ENCODE measurements at regions of chr5 and their contacts with region 1.

Region 1: GRCh38 chr5:91361055-91361701 is 21.9 kb downstream of the ARRDC3 start:
- DNase-seq: no peak
- H3K4me3 Mint-ChIP-seq: peak overlapping the region; percentile 2
- H3K27ac Mint-ChIP-seq: peak overlapping the region; percentile 56
- H3K4me1 Mint-ChIP-seq: peaks cover 12% of the 10 kb centered on the region
- H3K27me3 Mint-ChIP-seq: peaks cover 15% of the 10 kb centered on the region

Region 2: GRCh38 chr5:90783460-90784333 is 577.5 kb before region 1 on chr5:
- CTCF ChIA-PET with region 1: no interaction called
- POLR2A ChIA-PET with region 1: no interaction called
- intact Hi-C with region 1: no loop called
- DNase-seq: peak; percentile 70
- H3K4me3 Mint-ChIP-seq: no peak overlapping the region
- H3K27ac Mint-ChIP-seq: no peak overlapping the region
- H3K4me1 Mint-ChIP-seq: no peaks in the 10 kb centered on the region
- H3K27me3 Mint-ChIP-seq: peaks cover 4% of the 10 kb centered on the region

Region 3: GRCh38 chr5:91162534-91163381 is 198.4 kb before region 1 on chr5:
- CTCF ChIA-PET with region 1: no interaction called
- POLR2A ChIA-PET with region 1: no interaction called
- intact Hi-C with region 1: loop called (anchors 5 kb)
- DNase-seq: peak; percentile 86
- H3K4me3 Mint-ChIP-seq: no peak overlapping the region
- H3K27ac Mint-ChIP-seq: peak overlapping the region; percentile 67
- H3K4me1 Mint-ChIP-seq: peaks cover 19% of the 10 kb centered on the region
- H3K27me3 Mint-ChIP-seq: no peaks in the 10 kb centered on the region

Region 4: DNA sequence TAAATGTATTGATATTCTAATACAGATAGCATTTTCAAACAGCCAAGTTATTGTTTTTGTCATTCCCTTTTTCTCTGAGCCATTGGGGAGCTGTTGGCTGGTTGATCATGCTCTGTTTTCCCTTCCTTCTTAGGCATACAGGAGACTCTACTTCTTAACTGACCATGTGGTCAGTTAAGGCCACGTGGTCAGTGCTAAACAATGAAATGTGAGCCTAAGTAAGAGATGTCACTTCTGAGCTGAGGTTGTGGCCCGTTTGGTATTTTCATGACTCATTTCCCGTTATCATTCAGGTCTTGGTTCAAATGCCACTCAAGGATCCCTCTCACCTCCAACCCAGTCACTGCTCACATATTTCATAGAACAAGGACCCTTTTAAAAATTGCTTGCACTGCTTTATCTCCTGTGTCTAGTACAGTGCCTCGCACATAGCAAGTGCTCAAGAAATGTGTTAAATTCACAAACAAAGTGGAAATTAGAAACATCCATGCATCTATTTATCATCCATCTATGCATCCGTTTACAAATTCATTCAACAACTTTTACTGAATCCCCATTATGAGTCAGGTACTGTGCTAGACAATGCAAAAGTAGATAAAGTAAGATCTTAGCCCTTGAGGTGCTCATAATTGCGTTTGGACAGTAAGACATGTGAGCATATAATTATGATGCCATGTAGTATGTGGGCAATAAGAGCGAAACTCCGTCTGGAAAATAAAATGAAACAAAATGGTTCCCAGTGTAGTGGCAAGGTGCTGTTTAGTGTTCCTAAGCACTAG is 28.7 kb before region 1 on chr5:
- CTCF ChIA-PET with region 1: no interaction called
- POLR2A ChIA-PET with region 1: no interaction called
- intact Hi-C with region 1: loop called (anchors 5 kb)
- DNase-seq: peak; percentile 41
- H3K4me3 Mint-ChIP-seq: no peak overlapping the region
- H3K27ac Mint-ChIP-seq: no peak overlapping the region
- H3K4me1 Mint-ChIP-seq: peaks cover 15% of the 10 kb centered on the region
- H3K27me3 Mint-ChIP-seq: no peaks in the 10 kb centered on the region

Region 5: DNA sequence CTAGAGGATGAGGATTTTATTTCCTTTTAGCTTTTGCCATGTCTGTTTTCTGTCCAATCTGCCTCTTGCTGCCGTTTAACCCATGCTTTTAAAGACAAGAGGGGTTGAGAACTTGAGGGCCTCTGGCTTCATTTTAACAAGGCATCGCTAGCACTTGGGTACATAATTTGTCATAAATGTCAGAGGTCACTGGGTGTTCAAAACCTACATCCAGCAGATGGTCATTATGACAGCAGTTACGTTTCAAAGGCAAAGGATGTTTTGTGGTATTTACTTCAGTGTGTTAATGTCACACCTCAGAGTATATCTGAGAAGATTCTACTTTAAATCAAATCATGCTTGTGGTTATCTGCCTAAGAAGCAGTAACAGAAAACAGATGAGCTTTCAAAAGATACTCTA is 1301.6 kb after region 1 on chr5:
- CTCF ChIA-PET with region 1: no interaction called
- POLR2A ChIA-PET with region 1: no interaction called
- intact Hi-C with region 1: no loop called
- DNase-seq: no peak
- H3K4me3 Mint-ChIP-seq: no peak overlapping the region
- H3K27ac Mint-ChIP-seq: no peak overlapping the region
- H3K4me1 Mint-ChIP-seq: no peaks in the 10 kb centered on the region
- H3K27me3 Mint-ChIP-seq: no peaks in the 10 kb centered on the region